ENCODE measurements at regions of chr5 and their contacts with region 1.

Region 1: DNA sequence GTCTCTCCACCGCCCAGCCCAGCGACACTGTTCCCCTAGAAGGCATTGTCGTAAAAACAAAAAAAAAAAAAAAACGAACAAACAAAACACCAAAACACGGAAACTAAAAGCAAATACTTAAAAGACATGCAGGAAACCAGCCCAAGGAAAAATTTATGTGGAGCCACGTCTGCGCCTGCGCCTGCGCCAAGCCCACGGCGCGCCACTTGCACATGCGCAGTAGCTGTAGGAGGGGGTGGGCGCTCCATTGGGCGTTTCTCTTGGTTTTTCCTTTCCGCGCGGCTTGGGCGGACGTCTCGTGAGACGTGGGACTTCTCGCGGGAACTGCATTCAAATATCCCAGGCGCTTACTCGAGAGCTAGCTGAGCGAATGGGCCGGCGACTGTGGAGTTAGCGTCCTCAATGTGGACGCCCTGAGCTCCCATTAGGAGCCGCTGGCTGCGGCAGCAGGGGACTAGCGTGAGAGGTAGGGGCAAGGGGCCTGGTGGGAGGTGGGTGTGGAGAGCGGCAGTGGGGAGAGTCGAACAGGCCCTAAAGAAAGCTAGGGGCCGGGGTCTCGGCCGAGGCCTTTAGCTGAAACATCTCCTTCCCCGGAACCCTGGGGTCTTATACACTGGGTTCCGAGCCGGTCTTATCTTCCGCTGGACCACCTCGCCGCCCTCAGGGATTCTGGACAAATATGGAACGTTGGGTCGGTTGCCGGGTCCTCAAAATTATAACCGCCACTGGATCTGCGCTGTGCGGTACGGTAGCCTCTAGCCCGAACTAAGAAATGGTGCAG is at the start of gene SPDL1:
- DNase-seq: peak; percentile 97
- H3K4me3 ChIP-seq: peak within 1 kb of the TSS; percentile 69 to 88 (median 80)
- H3K27ac ChIP-seq: peak within 1 kb of the TSS; percentile 78 to 87 (median 82)
- H3K4me1 ChIP-seq: peaks cover 0 to 18% (median 10%) of the 10 kb centered on the region in 4 donors
- H3K27me3 ChIP-seq: no peaks in the 10 kb centered on the region
- CTCF ChIP-seq: no peak
- EP300 ChIP-seq: no peak
- POLR2A ChIP-seq: no peak
- total RNA-seq, gene SPDL1: 3.0 to 14.7 (median 9.0) TPM

Region 2: GRCh38 chr5:168579488-168580226 is 1004.0 kb before region 1 on chr5:
- intact Hi-C with region 1: loop called (anchors 5 kb)
- DNase-seq: peak; percentile 100
- H3K4me3 ChIP-seq: peak overlapping the region; percentile 74 to 94 (median 89)
- H3K27ac ChIP-seq: peak overlapping the region; percentile 95 to 99 (median 97)
- H3K4me1 ChIP-seq: peaks cover 0 to 44% (median 15%) of the 10 kb centered on the region in 4 donors
- H3K27me3 ChIP-seq: no peaks in the 10 kb centered on the region
- CTCF ChIP-seq: no peak
- EP300 ChIP-seq: peak in 1 of 4 donors; percentile 26
- POLR2A ChIP-seq: peak in 1 of 2 donors; percentile 82

Region 3: DNA sequence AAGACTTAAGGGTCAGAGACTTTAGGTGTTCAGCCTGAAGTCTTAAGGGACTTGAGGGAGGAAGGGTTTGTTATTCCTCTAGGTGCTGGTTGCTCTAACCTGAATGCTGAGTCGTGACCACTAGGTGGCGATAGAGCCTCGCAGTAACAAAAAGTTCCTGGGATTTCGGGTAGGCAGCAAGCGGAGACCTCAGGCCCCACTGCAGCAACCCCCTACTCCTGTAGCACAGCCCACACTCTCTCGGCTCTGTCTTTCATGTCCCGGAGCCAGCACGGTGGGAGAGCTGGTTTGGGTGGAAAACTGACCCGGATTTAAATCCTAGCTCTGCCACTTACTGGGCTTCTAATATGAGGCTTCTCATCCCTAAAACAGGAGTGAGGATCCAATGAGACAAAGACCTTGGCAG is 904.1 kb before region 1 on chr5:
- intact Hi-C with region 1: loop called (anchors 2 kb)
- DNase-seq: peak; percentile 83
- H3K4me3 ChIP-seq: no peak overlapping the region
- H3K27ac ChIP-seq: no peak overlapping the region
- H3K4me1 ChIP-seq: peaks cover 0 to 19% (median 4%) of the 10 kb centered on the region in 4 donors
- H3K27me3 ChIP-seq: no peaks in the 10 kb centered on the region
- CTCF ChIP-seq: peak; percentile 39 to 89 (median 74)
- EP300 ChIP-seq: no peak
- POLR2A ChIP-seq: no peak

Region 4: DNA sequence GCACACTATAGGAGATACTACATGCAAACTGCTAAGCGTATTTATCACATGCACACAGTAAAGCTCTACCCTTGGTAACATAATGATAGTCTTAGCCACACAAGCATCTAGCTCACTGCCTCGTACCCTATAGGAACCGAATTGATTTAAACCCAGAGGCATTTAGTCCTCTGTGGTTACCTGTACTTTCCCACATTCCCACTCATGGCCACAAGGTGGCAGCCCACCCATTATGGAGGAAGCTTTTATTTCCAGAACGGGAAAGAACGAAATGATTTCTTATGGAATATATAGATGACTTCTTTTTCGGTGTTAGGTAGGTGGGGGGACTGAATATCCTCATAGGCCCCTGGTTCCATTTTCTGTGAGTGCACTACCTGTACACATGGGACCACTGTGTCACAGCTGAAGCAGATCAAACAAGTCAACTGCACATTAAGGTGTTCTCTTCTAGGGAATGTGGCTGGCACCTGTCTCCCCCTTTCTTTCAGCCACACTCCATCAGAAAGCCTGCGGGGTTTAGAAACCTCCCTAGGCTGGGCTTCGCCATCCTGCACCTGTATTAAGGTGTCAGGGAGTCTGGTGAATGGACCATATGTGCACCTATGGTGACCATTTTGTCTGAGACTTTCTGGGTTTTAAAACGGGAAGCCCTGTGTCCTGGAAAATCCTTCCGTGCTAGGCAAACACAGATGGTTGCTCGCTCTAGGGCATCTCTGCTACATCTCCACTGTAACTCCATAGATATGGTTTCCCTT is 595.9 kb before region 1 on chr5:
- intact Hi-C with region 1: loop called (anchors 1 kb)
- DNase-seq: peak; percentile 79
- H3K4me3 ChIP-seq: no peak overlapping the region
- H3K27ac ChIP-seq: no peak overlapping the region
- H3K4me1 ChIP-seq: peaks cover 0 to 7% (median 0%) of the 10 kb centered on the region in 4 donors
- H3K27me3 ChIP-seq: no peaks in the 10 kb centered on the region
- CTCF ChIP-seq: peak; percentile 77 to 93 (median 85)
- EP300 ChIP-seq: no peak
- POLR2A ChIP-seq: no peak

Region 5: DNA sequence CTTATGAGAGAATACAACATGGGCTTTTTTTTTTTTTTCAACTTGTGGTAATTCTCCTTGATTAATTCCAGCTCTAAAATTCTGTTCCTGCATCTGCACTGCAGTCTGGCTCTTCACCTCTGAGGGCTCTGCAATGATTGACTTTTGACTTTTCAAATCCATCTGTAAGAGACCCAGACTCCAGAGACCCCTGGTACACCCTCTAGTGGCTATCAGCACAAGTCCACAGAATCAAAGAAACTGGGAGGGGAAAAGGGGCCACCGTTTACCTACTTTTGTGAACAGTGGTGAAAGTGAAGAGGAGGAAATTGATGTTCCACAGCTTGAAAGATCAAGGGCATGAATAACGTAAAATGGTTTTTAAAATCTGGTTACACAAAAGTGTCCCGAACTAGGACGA is 434.3 kb before region 1 on chr5:
- intact Hi-C with region 1: loop called (anchors 5 kb)
- DNase-seq: no peak
- H3K4me3 ChIP-seq: no peak overlapping the region
- H3K27ac ChIP-seq: no peak overlapping the region
- H3K4me1 ChIP-seq: peaks cover 0 to 70% (median 56%) of the 10 kb centered on the region in 4 donors
- H3K27me3 ChIP-seq: no peaks in the 10 kb centered on the region
- CTCF ChIP-seq: no peak
- EP300 ChIP-seq: no peak
- POLR2A ChIP-seq: no peak

Region 6: DNA sequence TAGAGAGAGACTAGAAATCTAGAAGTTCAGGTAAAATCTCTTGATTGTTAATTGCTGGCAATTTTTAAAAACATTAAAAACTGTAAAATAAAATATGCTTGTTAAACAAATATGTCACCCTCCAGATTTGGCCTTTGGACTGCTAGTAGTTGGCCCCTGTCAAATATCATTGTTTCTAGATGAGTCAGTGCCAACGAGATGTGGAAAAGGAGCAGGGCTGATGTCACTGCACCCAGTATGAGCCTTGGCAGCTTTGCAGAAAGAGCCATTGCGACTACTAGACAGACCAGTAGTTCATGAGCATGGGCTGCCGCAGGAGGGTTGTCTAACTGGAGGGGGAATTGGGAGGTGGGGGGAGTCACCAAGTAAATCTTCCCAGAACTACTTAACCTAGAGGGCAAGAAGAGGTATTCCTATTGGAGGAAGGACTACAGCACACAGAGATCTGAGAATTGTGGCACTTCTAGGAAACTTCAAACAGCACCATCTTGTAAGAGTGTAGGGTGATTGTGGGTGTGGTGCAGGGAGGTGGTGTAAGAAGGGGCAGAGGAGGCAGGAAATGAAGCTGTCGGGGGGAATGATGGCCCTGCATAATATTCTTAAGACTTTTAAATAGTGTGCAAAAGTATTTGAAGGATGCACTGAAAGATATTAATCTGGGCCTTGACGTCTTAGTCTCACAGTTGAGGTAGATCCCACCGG is 46.4 kb after region 1 on chr5:
- intact Hi-C with region 1: no loop called
- DNase-seq: no peak
- H3K4me3 ChIP-seq: no peak overlapping the region
- H3K27ac ChIP-seq: no peak overlapping the region
- H3K4me1 ChIP-seq: no peaks in the 10 kb centered on the region
- H3K27me3 ChIP-seq: no peaks in the 10 kb centered on the region
- CTCF ChIP-seq: no peak
- EP300 ChIP-seq: no peak
- POLR2A ChIP-seq: no peak

Region 7: GRCh38 chr5:169742771-169743296 is 159.2 kb after region 1 on chr5:
- intact Hi-C with region 1: no loop called
- DNase-seq: no peak
- H3K4me3 ChIP-seq: no peak overlapping the region
- H3K27ac ChIP-seq: no peak overlapping the region
- H3K4me1 ChIP-seq: no peaks in the 10 kb centered on the region
- H3K27me3 ChIP-seq: no peaks in the 10 kb centered on the region
- CTCF ChIP-seq: no peak
- EP300 ChIP-seq: no peak
- POLR2A ChIP-seq: no peak

Measured in sigmoid colon (tissue), 7 donors.